HEK293T (cell line): ENCODE measurements at regions of chr12 and their contacts with region 1.

Region 1: GRCh38 chr12:50222275-50222795 is 55.2 kb upstream of the CERS5 start:
- DNase-seq: peak; percentile 60

Region 2: GRCh38 chr12:50157259-50157658 is 65.1 kb before region 1 on chr12:
- CTCF ChIA-PET with region 1: no interaction called
- POLR2A ChIA-PET with region 1: no interaction called
- DNase-seq: no peak

Region 3: DNA sequence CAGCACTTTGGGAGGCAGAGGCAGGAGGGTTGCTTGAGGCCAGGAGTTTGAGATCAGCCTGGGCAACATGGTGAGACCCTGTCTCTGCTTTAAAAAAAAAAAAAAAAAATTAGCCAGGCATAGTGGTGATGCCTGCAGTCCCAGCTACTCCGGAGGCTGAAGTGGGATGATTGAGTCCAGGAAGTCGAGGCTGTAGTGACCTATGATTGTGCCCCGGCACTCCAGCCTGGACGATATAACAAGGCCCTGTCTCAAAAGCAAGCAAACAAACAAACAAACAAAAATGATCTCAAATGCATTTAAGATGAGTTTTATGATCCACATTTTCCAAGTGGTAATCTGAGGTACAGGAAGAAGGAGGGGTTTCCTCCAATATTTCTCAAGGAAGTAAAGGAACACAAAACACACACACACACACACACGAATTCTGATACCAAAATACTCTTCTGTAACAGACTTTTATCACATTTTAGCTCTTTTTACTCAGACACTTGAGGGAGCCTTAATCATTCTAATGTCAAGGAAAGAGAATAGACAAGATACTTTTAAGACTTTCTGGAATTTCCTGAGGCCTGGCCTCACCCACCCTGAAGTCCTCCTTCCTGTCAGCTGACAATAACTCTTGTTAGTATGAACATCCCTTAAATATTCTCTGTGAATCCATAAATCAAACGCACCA is 10.8 kb before region 1 on chr12:
- CTCF ChIA-PET with region 1: interaction called, 3 read pairs
- POLR2A ChIA-PET with region 1: interaction called, 29 read pairs
- DNase-seq: no peak

Region 4: DNA sequence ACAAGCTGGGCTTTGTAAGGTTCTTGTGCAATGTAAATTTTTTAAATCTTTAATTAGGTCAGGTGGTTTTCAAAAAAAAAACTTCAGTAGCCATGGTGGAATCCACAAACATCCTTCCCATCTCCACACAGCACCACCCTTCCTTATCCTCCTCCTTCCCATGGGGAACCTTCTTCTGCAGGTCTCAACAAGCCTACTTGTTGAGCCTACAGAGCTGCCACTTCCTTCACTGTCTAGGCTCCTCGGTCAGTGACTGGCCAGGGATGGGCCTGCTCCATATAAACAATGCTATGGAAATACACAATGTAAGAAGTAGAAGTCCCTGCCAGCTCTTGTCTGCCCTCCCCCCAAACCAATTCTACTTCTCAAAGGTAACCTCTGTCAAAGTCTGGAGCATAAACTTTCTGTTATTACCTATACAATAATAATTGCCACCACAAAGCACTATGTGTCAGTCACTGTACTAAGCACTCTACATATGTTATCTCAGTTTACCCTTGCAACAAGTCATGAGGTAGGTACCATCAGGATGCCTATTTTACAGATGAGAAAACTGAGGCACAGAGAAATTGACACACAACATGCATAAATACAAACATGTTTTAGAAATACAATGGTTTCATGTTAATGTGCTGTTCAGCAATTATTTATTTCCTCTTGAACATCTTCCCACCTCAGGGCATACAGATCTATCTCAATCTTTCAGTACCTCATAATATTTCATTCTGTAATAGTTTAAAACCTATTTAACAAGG is 43.6 kb after region 1 on chr12:
- CTCF ChIA-PET with region 1: no interaction called
- POLR2A ChIA-PET with region 1: no interaction called
- DNase-seq: no peak

Region 5: GRCh38 chr12:50283229-50283923 is 61.0 kb after region 1 on chr12 and contains the start of gene LIMA1:
- CTCF ChIA-PET with region 1: no interaction called
- POLR2A ChIA-PET with region 1: interaction called, 25 read pairs
- DNase-seq: peak; percentile 97

Region 6: DNA sequence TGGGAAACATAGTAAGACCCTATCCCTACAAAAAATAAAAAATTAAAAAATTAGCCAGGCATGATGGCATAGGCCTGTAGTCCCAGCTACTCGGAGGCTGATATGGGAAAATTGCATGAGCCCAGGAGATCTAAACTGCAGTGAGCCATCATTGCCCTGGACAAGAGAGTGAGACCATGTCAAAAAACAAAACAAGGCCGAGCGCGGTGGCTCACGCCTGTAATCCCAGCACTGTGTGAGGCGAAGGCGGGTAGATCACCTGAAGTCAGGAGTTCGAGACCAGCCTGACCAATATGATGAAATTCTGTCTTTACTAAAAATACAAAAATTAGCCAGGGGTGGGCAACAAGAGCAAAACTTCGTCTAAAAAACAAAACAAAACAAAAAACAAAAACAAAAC is 122.4 kb after region 1 on chr12:
- CTCF ChIA-PET with region 1: no interaction called
- POLR2A ChIA-PET with region 1: no interaction called
- DNase-seq: no peak